HEK293 (cell line): ENCODE measurements at regions of chr10 and their contacts with region 1.

Region 1: DNA sequence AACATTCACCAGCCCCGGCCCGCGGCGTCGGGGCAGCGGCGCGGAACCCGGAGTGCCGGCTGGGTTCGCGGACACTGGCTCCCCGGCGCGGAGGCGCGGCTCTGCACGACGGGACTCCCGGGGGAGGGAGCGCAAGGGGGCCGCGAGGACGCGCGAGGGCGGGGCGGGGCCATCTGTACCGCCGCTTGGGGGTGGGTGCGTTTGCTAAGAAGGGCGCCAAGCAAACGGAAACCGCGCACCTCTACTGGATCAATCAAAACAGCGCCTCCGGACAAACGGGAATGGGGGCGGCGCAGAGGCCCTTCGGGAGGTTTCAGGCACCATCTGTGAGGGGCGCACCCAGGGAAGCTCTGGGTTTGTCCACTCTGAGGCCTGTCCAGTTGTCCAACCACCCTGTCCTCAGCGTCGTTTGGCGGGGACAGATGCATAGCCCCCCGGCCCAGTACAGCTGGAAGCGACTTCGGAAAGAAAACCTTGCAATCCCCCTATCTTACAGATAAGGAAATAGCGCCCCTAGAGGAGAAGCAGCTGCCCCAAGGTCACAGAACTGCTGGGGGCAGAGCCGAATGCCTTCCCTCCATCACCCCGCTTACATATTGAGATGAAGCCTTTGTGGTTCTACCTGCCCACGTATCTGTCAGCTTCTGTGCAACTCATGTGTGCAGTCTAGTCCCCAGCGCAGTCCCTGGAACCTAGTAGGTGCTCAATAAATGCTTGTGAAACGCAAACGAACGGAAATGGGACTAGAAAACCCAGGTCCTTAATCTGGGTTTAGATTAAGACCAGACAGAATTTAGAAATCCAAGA is 10.7 kb upstream of the SLIT1 start:
- H3K4me3 ChIP-seq: peak overlapping the region; percentile 48
- H3K27ac ChIP-seq: no peak overlapping the region
- H3K4me1 ChIP-seq: peaks cover 3% of the 10 kb centered on the region
- CTCF ChIP-seq: peak; percentile 78

Region 2: DNA sequence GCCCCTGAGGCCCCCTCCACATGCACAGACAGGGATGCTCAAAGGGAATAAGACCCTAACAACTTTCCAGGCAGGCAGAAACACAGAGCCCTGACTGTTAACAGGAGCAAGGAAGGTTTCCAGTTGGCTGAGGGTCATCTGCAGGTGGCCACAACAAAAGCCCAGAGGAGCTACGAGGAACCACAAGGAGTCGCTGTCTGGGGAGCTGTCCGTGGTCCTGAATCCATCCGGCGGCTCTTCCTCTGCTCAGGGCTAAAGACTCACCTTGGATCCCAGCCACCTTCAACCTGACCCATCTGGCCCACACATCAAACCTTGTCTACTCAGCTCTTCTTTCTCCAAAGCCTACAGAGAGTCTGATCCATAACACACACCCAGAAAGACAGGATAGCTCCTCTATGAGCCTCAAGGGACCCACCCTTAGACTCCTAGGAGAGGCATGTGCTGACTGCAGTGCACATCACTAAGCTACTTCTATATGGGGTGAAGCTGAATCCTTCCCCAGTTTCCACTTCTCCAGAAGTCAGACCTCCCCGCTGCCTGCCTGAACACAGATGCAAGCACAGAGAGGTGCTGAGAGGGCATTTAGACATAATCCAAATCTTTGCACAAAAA is 114.7 kb before region 1 on chr10:
- CTCF ChIA-PET with region 1: interaction called, 22 read pairs
- POLR2A ChIA-PET with region 1: no interaction called
- H3K4me3 ChIP-seq: no peak overlapping the region
- H3K27ac ChIP-seq: no peak overlapping the region
- H3K4me1 ChIP-seq: no peaks in the 10 kb centered on the region
- CTCF ChIP-seq: peak; percentile 77

Region 3: DNA sequence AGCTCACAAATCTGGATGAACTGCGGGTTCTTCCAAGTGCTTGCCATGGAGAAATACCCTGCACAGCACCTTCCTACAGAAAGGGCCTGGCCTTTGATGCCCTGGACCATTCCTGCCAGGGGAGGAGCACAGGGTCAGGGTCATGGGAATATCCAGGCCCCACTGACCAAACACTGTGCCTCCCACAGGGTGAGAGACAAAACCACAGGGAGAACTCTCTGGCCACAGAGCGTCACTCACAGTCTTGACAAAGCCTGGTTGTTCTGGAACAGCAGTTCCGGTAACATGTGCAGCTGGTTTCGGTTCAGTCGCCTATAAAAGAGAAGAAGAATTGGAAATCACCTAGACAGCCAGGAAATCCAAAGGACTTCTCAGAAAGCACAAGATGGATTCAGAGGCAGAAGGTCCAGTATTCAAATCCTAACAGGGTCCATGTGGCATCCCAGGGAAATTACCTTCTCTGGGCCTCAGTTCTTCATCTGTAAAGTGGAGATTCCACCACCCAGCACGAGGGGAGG is 38.8 kb before region 1 on chr10:
- CTCF ChIA-PET with region 1: interaction called, 15 read pairs
- POLR2A ChIA-PET with region 1: no interaction called
- H3K4me3 ChIP-seq: no peak overlapping the region
- H3K27ac ChIP-seq: no peak overlapping the region
- H3K4me1 ChIP-seq: no peaks in the 10 kb centered on the region
- CTCF ChIP-seq: no peak

Region 4: GRCh38 chr10:97185326-97186058 is 10.9 kb before region 1 on chr10 and contains the start of gene SLIT1:
- CTCF ChIA-PET with region 1: interaction called, 17 read pairs
- POLR2A ChIA-PET with region 1: interaction called, 3 read pairs
- H3K4me3 ChIP-seq: peak within 1 kb of the TSS; percentile 32
- H3K27ac ChIP-seq: peak within 1 kb of the TSS; percentile 41; the same call in 1 of the 2 replicates
- H3K4me1 ChIP-seq: peaks cover 3% of the 10 kb centered on the region; the same call in 1 of the 2 replicates
- CTCF ChIP-seq: peak; percentile 70; the same call in 1 of the 2 replicates

Region 5: DNA sequence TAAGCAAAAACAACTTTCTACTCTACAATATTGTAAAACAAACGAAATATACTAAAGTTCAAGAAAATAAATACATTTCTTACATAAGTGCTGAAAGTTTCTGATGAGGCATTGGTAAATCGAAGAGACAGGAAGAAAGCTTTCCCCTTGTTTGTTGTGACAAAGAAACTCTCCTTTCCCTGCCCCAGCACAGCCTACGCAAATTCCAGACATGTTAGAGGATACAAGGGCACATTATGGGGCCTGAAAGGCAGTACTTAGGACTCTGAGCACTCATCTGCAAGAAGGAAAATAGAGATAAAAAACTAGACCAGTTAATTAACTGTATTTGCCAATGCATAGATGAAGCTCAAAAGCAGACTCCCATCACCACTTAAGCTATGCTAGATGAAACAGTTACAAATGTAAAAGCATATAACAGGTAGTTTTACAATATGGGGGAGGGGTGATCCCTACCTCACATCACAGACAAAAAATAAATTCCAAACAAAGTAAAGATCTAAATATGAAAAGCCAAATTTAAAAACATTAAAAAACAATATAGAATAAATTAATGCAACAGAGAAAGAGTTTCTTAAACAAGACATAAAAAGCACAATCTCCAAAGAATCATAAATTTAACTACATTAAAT is 74.2 kb after region 1 on chr10:
- CTCF ChIA-PET with region 1: no interaction called
- POLR2A ChIA-PET with region 1: no interaction called
- H3K4me3 ChIP-seq: no peak overlapping the region
- H3K27ac ChIP-seq: no peak overlapping the region
- H3K4me1 ChIP-seq: no peaks in the 10 kb centered on the region
- CTCF ChIP-seq: no peak

Region 6: GRCh38 chr10:97307866-97308780 is 111.7 kb after region 1 on chr10:
- CTCF ChIA-PET with region 1: no interaction called
- POLR2A ChIA-PET with region 1: no interaction called
- H3K4me3 ChIP-seq: no peak overlapping the region
- H3K27ac ChIP-seq: no peak overlapping the region
- H3K4me1 ChIP-seq: no peaks in the 10 kb centered on the region
- CTCF ChIP-seq: no peak